Caco-2 (cell line): ENCODE measurements at regions of chr13 and their contacts with region 1.

Region 1: DNA sequence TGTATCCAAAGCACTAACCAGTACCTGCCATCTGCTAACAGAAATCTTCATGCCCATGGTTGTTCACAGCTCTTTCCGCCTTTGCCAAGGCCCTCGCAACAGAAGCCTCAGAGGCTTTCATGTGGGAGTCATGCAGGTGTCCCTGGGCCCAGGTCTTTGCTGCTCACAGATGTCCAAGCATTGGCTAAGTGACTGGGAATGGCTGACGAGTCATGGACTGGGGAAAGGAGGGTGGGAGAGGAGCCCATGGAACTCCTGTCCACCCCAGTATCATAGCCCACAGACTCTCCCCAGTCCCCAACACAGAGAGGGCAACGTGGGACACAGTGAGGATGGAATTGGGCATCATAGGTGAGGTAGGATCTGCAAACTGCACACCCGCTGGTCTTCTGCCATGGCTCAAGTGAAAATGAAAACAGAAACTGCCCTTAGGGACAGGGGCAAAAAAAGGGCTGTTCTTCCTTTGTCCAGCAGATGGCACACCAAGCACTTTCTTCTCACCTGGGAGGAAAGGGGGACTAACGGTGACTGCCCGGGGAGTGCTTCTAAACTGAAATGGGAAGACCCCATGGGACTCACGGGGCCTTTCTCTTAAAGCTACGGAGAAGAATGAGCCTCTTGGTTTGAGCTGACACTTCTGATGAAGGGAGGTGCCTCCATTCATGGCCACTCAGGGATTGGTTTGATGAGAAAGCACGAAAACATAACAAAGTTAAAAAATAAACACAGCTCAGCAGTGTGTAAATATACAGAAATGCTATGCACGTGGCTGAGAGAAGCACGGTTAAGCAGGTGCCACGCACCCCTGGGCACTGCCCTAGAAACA is 11.1 kb upstream of the DHRS12 start:
- DNase-seq: peak; percentile 68 to 80
- H3K4me3 ChIP-seq: no peak overlapping the region
- H3K4me3 Mint-ChIP-seq: peak overlapping the region; percentile 62
- H3K27ac Mint-ChIP-seq: no peak overlapping the region
- H3K4me1 ChIP-seq: no peaks in the 10 kb centered on the region
- H3K4me1 Mint-ChIP-seq: peaks cover 14% of the 10 kb centered on the region
- H3K27me3 ChIP-seq: no peaks in the 10 kb centered on the region
- H3K27me3 Mint-ChIP-seq: peaks cover 19% of the 10 kb centered on the region
- CTCF ChIP-seq: peak; percentile 83 to 88

Region 2: DNA sequence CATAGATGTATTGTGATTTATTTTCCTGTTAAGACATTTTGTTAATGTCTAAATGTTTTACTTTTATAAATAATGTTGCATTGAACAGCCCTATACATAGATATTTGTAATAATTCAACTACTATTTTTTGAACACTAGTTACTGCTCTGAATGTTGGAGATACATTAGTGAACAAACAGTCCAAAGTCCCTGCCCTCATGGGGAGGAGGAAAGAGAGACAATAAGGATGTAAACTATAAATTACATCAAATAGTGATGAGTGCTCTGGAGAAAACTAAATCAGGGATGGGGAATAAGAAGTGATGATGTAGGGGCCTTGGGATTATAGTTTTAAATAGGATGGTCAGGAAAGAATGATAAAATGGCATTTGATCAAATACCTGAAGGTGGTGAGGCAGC is 349.9 kb before region 1 on chr13:
- CTCF ChIA-PET with region 1: no interaction called
- POLR2A ChIA-PET with region 1: no interaction called
- intact Hi-C with region 1: no loop called
- DNase-seq: no peak
- H3K4me3 ChIP-seq: no peak overlapping the region
- H3K4me3 Mint-ChIP-seq: no peak overlapping the region
- H3K27ac Mint-ChIP-seq: no peak overlapping the region
- H3K4me1 ChIP-seq: no peaks in the 10 kb centered on the region
- H3K4me1 Mint-ChIP-seq: no peaks in the 10 kb centered on the region
- H3K27me3 ChIP-seq: no peaks in the 10 kb centered on the region
- H3K27me3 Mint-ChIP-seq: peaks cover 4% of the 10 kb centered on the region
- CTCF ChIP-seq: no peak

Region 3: GRCh38 chr13:51832471-51833152 is 17.6 kb after region 1 on chr13:
- CTCF ChIA-PET with region 1: no interaction called
- POLR2A ChIA-PET with region 1: interaction called, 3 read pairs
- intact Hi-C with region 1: loop called (anchors 2 kb)
- DNase-seq: no peak
- H3K4me3 ChIP-seq: no peak overlapping the region
- H3K4me3 Mint-ChIP-seq: no peak overlapping the region
- H3K27ac Mint-ChIP-seq: no peak overlapping the region
- H3K4me1 ChIP-seq: no peaks in the 10 kb centered on the region
- H3K4me1 Mint-ChIP-seq: no peaks in the 10 kb centered on the region
- H3K27me3 ChIP-seq: no peaks in the 10 kb centered on the region
- H3K27me3 Mint-ChIP-seq: peaks cover 8% of the 10 kb centered on the region
- CTCF ChIP-seq: peak in 1 of 2 experiments; percentile 22

Region 4: GRCh38 chr13:51865838-51866237 is 50.8 kb after region 1 on chr13:
- CTCF ChIA-PET with region 1: no interaction called
- POLR2A ChIA-PET with region 1: no interaction called
- intact Hi-C with region 1: loop called (anchors 1 kb)
- DNase-seq: no peak
- H3K4me3 ChIP-seq: no peak overlapping the region
- H3K4me3 Mint-ChIP-seq: no peak overlapping the region
- H3K27ac Mint-ChIP-seq: no peak overlapping the region
- H3K4me1 ChIP-seq: no peaks in the 10 kb centered on the region
- H3K4me1 Mint-ChIP-seq: no peaks in the 10 kb centered on the region
- H3K27me3 ChIP-seq: no peaks in the 10 kb centered on the region
- H3K27me3 Mint-ChIP-seq: peaks cover 3% of the 10 kb centered on the region
- CTCF ChIP-seq: no peak

Region 5: GRCh38 chr13:51935326-51936201 is 120.5 kb after region 1 on chr13:
- CTCF ChIA-PET with region 1: no interaction called
- POLR2A ChIA-PET with region 1: no interaction called
- intact Hi-C with region 1: loop called (anchors 5 kb)
- DNase-seq: peak; percentile 47 to 56
- H3K4me3 ChIP-seq: no peak overlapping the region
- H3K4me3 Mint-ChIP-seq: no peak overlapping the region
- H3K27ac Mint-ChIP-seq: no peak overlapping the region
- H3K4me1 ChIP-seq: no peaks in the 10 kb centered on the region
- H3K4me1 Mint-ChIP-seq: no peaks in the 10 kb centered on the region
- H3K27me3 ChIP-seq: no peaks in the 10 kb centered on the region
- H3K27me3 Mint-ChIP-seq: no peaks in the 10 kb centered on the region
- CTCF ChIP-seq: peak; percentile 56 to 73

Region 6: GRCh38 chr13:52187029-52187423 is 372.0 kb after region 1 on chr13:
- CTCF ChIA-PET with region 1: no interaction called
- POLR2A ChIA-PET with region 1: no interaction called
- intact Hi-C with region 1: no loop called
- DNase-seq: no peak
- H3K4me3 ChIP-seq: no peak overlapping the region
- H3K4me3 Mint-ChIP-seq: no peak overlapping the region
- H3K27ac Mint-ChIP-seq: no peak overlapping the region
- H3K4me1 ChIP-seq: no peaks in the 10 kb centered on the region
- H3K4me1 Mint-ChIP-seq: no peaks in the 10 kb centered on the region
- H3K27me3 ChIP-seq: no peaks in the 10 kb centered on the region
- H3K27me3 Mint-ChIP-seq: no peaks in the 10 kb centered on the region
- CTCF ChIP-seq: no peak